HAP-1 (cell line): ENCODE measurements at regions of chr12 and their contacts with region 1.

Region 1: GRCh38 chr12:125399489-125399888 is 334.3 kb downstream of the AACS start:
- DNase-seq: no peak
- H3K4me3 ChIP-seq: no peak overlapping the region
- H3K4me1 ChIP-seq: no peaks in the 10 kb centered on the region
- H3K27me3 ChIP-seq: no peaks in the 10 kb centered on the region

Region 2: DNA sequence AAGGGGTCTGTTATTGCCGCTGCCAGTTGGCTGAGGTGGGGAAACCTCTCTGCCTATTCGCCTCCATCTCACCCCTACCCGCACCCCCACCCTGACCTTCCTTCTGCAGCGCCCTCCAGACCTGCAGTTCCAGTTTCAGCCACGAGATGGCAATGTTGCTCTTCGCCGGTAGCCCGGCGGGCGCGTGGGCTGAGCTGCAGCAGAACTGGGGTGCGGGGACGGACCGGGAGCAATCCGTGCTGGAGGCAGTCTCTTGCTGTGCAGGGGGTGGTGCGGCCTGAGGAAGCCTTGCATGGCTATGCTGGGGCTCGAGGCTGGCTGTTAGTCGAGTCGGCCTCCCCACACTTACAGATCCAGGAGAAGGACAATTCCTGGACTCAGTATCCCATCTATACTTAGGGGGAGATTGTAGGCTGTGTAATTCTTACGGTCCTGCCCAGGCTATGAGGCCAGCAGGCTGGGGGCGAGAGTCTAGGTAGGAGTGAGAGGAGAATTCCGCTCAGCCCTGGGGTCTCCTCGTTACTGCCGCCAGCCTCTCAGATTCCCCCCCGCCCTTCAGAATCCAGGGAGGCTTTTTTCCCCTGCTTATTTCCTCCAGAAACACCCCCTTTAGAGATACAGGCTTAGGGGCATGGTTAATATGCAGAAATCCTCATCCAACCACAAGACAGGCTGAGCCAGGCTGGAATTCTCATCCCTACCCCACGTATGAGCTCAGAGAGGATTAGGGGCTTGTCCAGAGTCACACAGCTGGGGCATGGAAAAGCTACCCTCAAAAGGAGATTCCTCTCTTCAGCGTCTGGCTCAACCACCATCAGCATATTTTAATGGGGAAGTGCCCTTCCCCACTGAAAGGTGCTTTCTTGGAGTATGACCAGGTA is 216.1 kb before region 1 on chr12:
- in situ Hi-C with region 1: loop called (anchors 10 kb)
- DNase-seq: peak; percentile 56 to 90
- H3K4me3 ChIP-seq: no peak overlapping the region
- H3K4me1 ChIP-seq: no peaks in the 10 kb centered on the region; the same call in 1 of the 2 replicates
- H3K27me3 ChIP-seq: peaks cover 16% of the 10 kb centered on the region

Region 3: DNA sequence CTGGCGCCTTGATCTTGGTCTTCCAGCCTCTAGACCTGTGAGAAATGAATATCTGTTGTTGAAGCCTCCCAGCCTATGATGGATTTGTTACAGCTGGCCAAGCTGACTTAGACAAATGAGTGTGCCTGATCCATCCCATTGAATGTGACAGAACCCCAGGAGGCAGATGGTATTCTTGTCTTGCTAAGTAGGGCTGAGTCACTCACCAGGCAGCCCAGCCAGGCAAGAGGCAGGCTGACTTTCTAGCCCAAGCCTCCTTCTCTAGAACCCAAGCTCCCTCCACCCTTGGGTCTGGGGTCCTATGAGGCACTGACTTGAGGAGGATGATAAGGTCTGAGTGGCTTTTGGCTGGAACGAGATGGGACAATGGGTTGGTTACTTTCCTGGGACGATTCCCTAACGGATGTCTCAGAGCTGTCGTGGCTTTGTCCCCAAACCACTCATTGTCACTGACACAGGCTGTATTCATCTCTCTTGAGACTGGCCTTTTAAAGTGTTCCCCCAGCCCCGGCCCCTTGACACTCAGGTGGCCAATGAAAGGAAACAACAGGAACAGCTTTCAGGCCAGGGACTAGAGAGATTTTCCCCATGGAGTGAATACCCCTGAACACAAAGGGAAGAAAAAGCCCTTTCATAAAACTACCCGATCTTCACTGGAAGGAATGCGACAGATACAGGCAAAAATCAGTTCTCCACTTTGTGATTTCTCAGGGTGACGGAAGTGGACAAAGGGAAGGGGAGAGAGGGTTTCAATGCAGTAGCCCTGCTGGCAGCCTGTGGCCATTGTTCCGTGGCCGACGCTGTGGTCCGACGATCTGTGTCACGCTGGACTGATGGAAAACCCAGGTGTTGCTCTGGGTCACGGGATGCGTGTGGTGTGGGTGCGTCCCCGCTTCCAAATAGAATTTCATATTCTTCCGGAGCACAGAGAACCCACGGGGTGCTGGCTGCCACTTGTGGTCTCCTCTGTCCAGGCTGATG is 70.0 kb before region 1 on chr12:
- in situ Hi-C with region 1: no loop called
- DNase-seq: no peak
- H3K4me3 ChIP-seq: no peak overlapping the region
- H3K4me1 ChIP-seq: no peaks in the 10 kb centered on the region
- H3K27me3 ChIP-seq: peaks cover 3% of the 10 kb centered on the region; the same call in 1 of the 2 replicates